Mammary epithelial cell (primary cell): ENCODE measurements at regions of chr6 and their contacts with region 1.

Region 1: GRCh38 chr6:133923938-133924593 is 29.0 kb upstream of the TBPL1 start:
- DNase-seq: peak; percentile 59
- H3K4me3 ChIP-seq: no peak overlapping the region
- H3K27ac ChIP-seq: no peak overlapping the region
- H3K4me1 ChIP-seq: no peaks in the 10 kb centered on the region
- H3K27me3 ChIP-seq: no peaks in the 10 kb centered on the region
- CTCF ChIP-seq: peak; percentile 78 to 87

Region 2: GRCh38 chr6:132830334-132830751 is 1093.7 kb before region 1 on chr6:
- CTCF ChIA-PET with region 1: no interaction called
- dilution Hi-C with region 1: no loop called
- in situ Hi-C with region 1: no loop called
- intact Hi-C with region 1: loop called (anchors 5 kb)
- DNase-seq: no peak
- H3K4me3 ChIP-seq: no peak overlapping the region
- H3K27ac ChIP-seq: no peak overlapping the region
- H3K4me1 ChIP-seq: no peaks in the 10 kb centered on the region
- H3K27me3 ChIP-seq: no peaks in the 10 kb centered on the region
- CTCF ChIP-seq: peak; percentile 38 to 66

Region 3: DNA sequence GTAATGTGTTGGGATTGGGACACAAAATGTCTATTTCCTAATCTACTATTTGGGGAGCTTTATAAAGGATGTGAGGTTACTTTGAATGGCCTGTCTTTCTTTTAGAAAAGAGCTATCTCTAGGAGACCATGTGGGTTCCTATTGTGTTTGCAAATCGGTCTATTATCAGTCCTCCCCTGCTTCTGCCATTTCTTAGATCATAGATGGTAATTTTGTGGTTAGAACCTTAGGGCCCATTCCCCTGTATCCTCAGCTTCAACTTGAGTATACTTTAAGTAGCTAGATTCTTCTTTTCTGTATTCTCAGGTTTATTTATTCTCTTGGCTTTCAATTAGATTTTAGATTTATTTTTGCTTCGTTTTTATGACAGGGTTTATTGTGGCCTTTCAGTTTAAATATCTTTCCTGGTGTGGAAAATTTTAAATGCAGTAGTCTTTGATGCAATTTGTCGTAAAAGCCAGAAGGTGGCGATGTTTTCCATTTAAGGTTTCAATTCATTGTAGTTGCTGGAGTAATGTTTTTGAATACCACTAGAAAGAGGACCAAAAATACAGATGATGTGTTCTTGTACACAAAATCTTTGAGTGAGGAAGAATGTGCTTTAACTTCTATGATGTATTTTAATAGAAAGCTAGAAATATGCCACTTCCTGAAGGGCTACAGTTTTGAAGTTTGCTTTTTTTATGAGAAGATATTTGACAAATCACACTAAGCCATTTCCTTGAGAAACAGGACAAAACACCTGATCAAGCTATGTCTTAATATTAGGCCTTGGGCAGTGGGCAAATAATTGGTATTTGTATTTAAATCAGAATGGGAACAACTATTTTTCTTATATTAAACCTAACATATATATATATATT is 49.3 kb after region 1 on chr6:
- CTCF ChIA-PET with region 1: interaction called, 4 read pairs
- dilution Hi-C with region 1: no loop called
- in situ Hi-C with region 1: loop called in 1 of 2 experiments (anchors 5 kb)
- intact Hi-C with region 1: loop called (anchors 1 kb)
- DNase-seq: peak; percentile 31
- H3K4me3 ChIP-seq: no peak overlapping the region
- H3K27ac ChIP-seq: no peak overlapping the region
- H3K4me1 ChIP-seq: peaks cover 7% of the 10 kb centered on the region
- H3K27me3 ChIP-seq: no peaks in the 10 kb centered on the region
- CTCF ChIP-seq: peak; percentile 69 to 70

Region 4: GRCh38 chr6:134063966-134064445 is 139.9 kb after region 1 on chr6:
- CTCF ChIA-PET with region 1: no interaction called
- dilution Hi-C with region 1: no loop called
- in situ Hi-C with region 1: no loop called
- intact Hi-C with region 1: loop called (anchors 1 kb)
- DNase-seq: peak; percentile 55
- H3K4me3 ChIP-seq: no peak overlapping the region
- H3K27ac ChIP-seq: no peak overlapping the region
- H3K4me1 ChIP-seq: peaks cover 20% of the 10 kb centered on the region
- H3K27me3 ChIP-seq: no peaks in the 10 kb centered on the region
- CTCF ChIP-seq: peak; percentile 93 to 98

Region 5: GRCh38 chr6:134103006-134103405 is 178.9 kb after region 1 on chr6:
- CTCF ChIA-PET with region 1: interaction called, 45 read pairs
- dilution Hi-C with region 1: loop called (anchors 5 kb)
- in situ Hi-C with region 1: loop called (anchors 5 kb)
- intact Hi-C with region 1: no loop called
- DNase-seq: no peak
- H3K4me3 ChIP-seq: no peak overlapping the region
- H3K27ac ChIP-seq: no peak overlapping the region
- H3K4me1 ChIP-seq: no peaks in the 10 kb centered on the region
- H3K27me3 ChIP-seq: no peaks in the 10 kb centered on the region
- CTCF ChIP-seq: no peak